Activated B cell treated with CpG ODN at 0.5 μM for 24 hours (primary cell): ENCODE measurements at regions of chr2 and their contacts with region 1.

Region 1: GRCh38 chr2:11743846-11744553 is 2.4 kb upstream of the LPIN1 start:
- DNase-seq: peak; percentile 62
- ATAC-seq: peak; percentile 60
- H3K4me3 Mint-ChIP-seq: peak overlapping the region; percentile 71
- H3K27ac Mint-ChIP-seq: peak overlapping the region; percentile 82
- H3K4me1 Mint-ChIP-seq: peaks cover 54% of the 10 kb centered on the region
- H3K27me3 Mint-ChIP-seq: no peaks in the 10 kb centered on the region
- CTCF ChIP-seq: no peak

Region 2: GRCh38 chr2:11154923-11155380 is 589.0 kb before region 1 on chr2:
- CTCF ChIA-PET with region 1: no interaction called
- POLR2A ChIA-PET with region 1: interaction called, 4 read pairs
- intact Hi-C with region 1: loop called (anchors 1 kb)
- DNase-seq: peak; percentile 91
- ATAC-seq: peak; percentile 92
- H3K4me3 Mint-ChIP-seq: peak overlapping the region; percentile 85
- H3K27ac Mint-ChIP-seq: peak overlapping the region; percentile 84
- H3K4me1 Mint-ChIP-seq: peaks cover 20% of the 10 kb centered on the region
- H3K27me3 Mint-ChIP-seq: no peaks in the 10 kb centered on the region
- CTCF ChIP-seq: no peak

Region 3: DNA sequence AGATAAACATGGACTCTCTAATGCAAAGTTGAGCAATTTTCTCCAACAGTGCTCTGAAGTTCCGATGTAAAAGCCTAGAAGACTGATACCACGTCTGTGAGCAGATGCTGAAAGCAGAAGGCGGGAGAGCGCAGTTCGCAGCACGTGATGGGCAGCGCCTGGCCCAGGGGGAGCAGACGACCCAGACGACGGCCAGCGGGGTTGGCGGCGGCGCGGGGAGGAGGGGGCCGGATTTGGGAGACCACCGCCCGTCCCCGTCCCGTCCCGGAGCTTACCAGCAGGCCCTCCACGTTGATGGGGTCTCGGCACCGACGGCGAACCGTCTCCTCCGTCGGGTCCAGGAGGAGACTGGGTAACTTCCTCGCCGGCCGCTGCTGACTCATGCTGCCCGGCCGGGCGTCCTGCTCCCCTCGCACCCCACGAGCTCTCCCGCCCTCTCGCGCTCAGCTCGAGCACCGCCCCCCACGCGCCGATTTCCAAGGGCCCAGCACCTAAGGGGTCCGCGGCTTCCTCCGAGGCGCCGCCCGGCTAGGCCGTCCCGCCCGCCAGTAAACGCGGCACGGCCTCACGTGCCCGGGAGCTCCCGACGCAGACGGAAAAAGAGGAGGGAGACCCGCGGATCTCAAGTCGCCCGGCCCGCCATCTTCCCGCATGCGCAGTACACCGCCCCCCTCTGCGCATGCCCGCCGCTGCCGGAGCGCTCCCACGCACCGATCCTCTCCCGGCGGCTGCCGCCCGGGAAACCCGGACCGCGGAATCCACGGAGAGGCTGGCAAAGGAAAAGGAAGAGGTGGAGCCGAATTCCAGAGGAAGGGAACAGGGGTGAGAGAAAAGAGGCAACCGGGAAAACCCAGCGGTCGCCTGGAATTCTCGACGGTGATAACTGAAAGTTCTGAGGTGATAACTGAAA is 278.2 kb before region 1 on chr2 and contains the start of gene E2F6:
- CTCF ChIA-PET with region 1: no interaction called
- POLR2A ChIA-PET with region 1: no interaction called
- intact Hi-C with region 1: loop called (anchors 2 kb)
- DNase-seq: peak; percentile 93
- ATAC-seq: peak; percentile 81
- H3K4me3 Mint-ChIP-seq: peak within 1 kb of the TSS; percentile 98
- H3K27ac Mint-ChIP-seq: peak within 1 kb of the TSS; percentile 89
- H3K4me1 Mint-ChIP-seq: peaks cover 31% of the 10 kb centered on the region
- H3K27me3 Mint-ChIP-seq: no peaks in the 10 kb centered on the region
- CTCF ChIP-seq: no peak
- total RNA-seq, gene E2F6: 11.8 and 12.4 TPM in 2 replicates

Region 4: DNA sequence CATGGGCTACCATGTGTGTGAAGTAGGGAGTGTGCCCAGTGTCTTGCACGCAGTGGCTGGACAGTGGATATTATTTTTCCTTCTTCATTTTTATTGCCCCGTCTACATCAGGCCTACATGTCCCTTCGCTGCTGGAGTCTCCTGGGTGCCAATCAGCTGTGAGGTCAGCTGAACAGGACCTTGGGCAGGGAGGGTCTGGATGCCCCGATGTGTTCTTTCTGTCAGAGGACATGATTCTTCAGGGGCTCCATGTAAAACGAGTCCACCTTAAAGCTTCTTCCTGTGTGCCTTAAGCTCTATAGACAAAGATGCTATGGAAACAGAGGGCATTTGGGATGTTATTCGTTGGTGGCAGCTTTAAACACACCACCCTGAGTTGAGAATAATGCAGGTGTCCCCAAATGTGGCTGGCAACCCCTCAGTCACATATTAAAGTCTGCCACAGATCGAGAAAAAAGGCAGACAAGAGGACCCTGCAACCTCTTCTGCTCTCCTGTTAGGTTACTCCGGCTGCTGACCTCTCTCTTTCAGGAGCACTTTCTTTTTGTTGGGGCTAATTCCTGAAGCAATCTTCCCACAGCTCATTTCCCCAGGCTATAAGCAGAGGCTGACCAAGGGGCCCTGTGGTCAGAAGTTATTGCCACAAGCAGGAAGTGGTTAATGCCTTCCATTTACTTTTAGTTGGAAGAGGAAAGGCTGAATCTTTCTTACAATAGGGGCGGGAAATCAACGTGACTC is 190.2 kb before region 1 on chr2:
- CTCF ChIA-PET with region 1: no interaction called
- POLR2A ChIA-PET with region 1: no interaction called
- intact Hi-C with region 1: no loop called
- DNase-seq: no peak
- ATAC-seq: no peak
- H3K4me3 Mint-ChIP-seq: no peak overlapping the region
- H3K27ac Mint-ChIP-seq: no peak overlapping the region
- H3K4me1 Mint-ChIP-seq: no peaks in the 10 kb centered on the region
- H3K27me3 Mint-ChIP-seq: peaks cover 28% of the 10 kb centered on the region
- CTCF ChIP-seq: no peak

Region 5: DNA sequence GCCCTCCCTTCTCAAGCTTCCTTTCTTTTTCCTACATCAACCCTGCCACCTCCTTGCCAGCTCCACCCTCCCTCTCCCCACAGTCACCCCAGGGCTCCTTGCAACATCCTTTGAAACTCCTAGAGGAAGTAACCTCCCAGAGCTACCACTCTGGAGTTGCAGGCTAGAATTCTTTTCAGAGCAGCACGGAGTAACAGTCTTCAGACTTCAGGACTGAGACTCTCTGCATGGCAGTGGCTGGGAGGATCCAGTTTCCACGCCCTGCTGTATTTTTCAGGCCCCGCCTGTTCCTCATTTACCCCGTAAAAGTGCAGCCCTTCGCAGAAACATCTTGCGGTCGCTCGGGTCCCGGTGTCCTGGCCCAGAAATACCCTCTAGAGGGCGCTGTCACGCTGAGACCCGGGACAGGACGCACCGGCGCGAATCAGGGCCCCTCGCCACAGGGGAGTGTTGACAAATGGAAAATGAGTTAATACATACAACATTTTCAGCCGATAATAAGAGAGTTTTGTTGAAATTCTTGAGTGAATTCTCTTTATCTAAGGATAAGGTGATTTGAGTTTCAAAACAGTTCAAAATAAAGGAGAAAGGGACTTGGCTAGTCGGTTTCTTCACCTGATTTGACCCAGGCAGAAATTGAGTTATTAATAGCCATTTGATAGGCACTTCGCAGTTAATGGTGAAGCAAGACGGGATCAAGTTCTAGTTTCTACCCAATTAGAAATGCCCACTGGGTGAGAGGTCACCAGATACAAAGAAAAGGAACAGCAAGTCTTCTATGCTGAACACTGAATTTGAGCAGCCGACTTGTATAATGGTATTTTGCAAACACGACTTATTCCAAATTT is 55.6 kb before region 1 on chr2:
- CTCF ChIA-PET with region 1: interaction called, 7 read pairs
- POLR2A ChIA-PET with region 1: interaction called, 3 read pairs
- intact Hi-C with region 1: loop called (anchors 2 kb)
- DNase-seq: peak; percentile 68
- ATAC-seq: peak; percentile 87
- H3K4me3 Mint-ChIP-seq: peak overlapping the region; percentile 39
- H3K27ac Mint-ChIP-seq: no peak overlapping the region
- H3K4me1 Mint-ChIP-seq: peaks cover 9% of the 10 kb centered on the region
- H3K27me3 Mint-ChIP-seq: peaks cover 8% of the 10 kb centered on the region
- CTCF ChIP-seq: no peak

Region 6: GRCh38 chr2:11753886-11754699 is 10.1 kb after region 1 on chr2:
- CTCF ChIA-PET with region 1: interaction called, 15 read pairs
- POLR2A ChIA-PET with region 1: interaction called, 39 read pairs
- intact Hi-C with region 1: loop called (anchors 1 kb)
- DNase-seq: peak; percentile 43
- ATAC-seq: peak; percentile 54
- H3K4me3 Mint-ChIP-seq: peak overlapping the region; percentile 82
- H3K27ac Mint-ChIP-seq: peak overlapping the region; percentile 96
- H3K4me1 Mint-ChIP-seq: peaks cover 90% of the 10 kb centered on the region
- H3K27me3 Mint-ChIP-seq: no peaks in the 10 kb centered on the region
- CTCF ChIP-seq: no peak

Region 7: DNA sequence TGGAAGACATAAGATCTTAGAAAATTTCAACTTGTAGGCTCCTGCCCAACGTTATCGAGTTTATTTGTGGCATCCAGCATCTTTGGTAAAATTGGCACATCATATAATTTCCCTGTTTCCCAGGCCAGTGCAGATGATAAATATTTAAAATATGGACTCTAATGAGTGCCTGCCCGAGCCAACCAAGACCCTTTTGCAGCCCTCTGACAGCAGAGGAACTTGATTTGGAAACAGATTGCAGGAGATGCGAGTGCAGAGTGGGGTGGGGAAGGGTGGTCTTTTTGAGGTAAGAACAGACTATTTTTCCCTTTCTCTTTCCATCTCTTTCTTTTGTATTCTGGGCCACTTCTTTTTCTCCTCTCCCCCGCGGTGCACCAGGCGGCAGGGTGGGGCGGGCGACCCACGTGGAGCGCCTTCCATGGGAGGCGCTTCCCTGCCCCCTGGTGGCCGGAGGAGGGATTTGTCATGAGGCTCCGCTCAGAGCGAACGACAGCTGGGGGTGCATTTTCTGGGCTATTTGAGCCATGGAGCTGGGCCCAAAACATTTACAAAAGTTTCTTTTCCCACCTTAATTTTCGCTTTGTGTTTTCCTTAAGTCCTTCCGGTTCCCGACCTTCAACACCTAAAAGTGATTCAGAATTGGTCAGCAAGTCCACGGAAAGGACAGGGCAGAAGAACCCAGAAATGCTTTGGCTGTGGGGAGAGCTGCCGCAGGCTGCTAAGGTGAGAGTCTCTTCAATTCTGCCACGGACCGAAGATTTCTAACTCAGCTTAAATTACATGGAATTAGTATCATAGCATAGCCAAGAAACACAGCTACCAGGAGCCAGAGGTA is 35.1 kb after region 1 on chr2:
- CTCF ChIA-PET with region 1: interaction called, 54 read pairs
- POLR2A ChIA-PET with region 1: interaction called, 6 read pairs
- intact Hi-C with region 1: loop called (anchors 2 kb)
- DNase-seq: peak; percentile 79
- ATAC-seq: peak; percentile 94
- H3K4me3 Mint-ChIP-seq: peak overlapping the region; percentile 52
- H3K27ac Mint-ChIP-seq: no peak overlapping the region
- H3K4me1 Mint-ChIP-seq: peaks cover 32% of the 10 kb centered on the region
- H3K27me3 Mint-ChIP-seq: no peaks in the 10 kb centered on the region
- CTCF ChIP-seq: peak; percentile 1

Region 8: DNA sequence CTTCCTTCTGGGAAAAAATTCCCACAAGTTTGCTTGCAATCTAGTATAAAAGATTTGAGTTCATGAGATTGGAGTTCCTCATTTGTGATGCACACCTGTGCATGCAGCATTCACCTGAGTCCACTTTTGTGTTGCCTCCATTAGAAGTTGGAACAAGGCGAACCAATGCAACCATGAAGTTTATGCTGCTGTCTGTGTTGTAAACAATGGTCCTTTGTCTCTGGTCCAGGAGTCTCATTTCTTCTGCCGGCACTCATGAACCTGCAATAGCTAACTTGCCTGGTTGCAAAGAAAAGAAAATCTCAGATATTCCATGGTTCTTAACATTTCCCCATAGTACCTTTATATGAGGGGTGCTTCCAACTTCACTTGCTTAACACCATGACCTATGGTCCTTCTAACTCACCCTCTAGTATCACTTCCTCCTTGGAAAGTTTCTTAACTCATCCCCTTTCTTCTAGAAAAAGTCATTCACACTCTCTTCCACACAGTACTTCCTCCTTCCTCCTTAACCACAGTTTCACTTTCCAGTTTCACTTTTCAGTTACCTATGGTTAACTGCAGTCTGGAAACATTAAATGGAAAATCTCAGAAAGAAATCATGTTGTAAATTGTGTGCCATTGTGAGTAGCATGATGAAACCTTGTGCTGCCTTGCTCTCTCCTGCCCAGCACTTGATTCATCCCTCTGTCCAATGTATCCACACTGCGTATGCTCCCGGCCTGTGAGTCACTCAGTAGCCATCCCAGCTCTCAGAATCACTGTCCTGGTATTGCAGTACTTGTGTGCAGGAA is 843.9 kb after region 1 on chr2:
- CTCF ChIA-PET with region 1: no interaction called
- POLR2A ChIA-PET with region 1: no interaction called
- intact Hi-C with region 1: loop called (anchors 10 kb)
- DNase-seq: no peak
- ATAC-seq: peak; percentile 91
- H3K4me3 Mint-ChIP-seq: peak overlapping the region; percentile 36
- H3K27ac Mint-ChIP-seq: peak overlapping the region; percentile 70
- H3K4me1 Mint-ChIP-seq: peaks cover 56% of the 10 kb centered on the region
- H3K27me3 Mint-ChIP-seq: no peaks in the 10 kb centered on the region
- CTCF ChIP-seq: no peak